Esophagus muscularis mucosa (tissue), 4 donors: ENCODE measurements at regions of chr2 and their contacts with region 1.

Region 1: GRCh38 chr2:240434728-240435456 is 571 bp upstream of the GPC1 start:
- DNase-seq: peak; percentile 95
- H3K4me3 ChIP-seq: peak overlapping the region; percentile 65 to 84 (median 77)
- H3K27ac ChIP-seq: peak overlapping the region; percentile 94 to 96 (median 95)
- H3K4me1 ChIP-seq: peaks cover 36 to 53% (median 48%) of the 10 kb centered on the region in 4 donors
- H3K27me3 ChIP-seq: peaks cover 0 to 19% (median 0%) of the 10 kb centered on the region in 4 donors
- CTCF ChIP-seq: no peak
- EP300 ChIP-seq: no peak
- POLR2A ChIP-seq: no peak

Region 2: GRCh38 chr2:240232961-240233893 is 201.7 kb before region 1 on chr2:
- intact Hi-C with region 1: loop called (anchors 1 kb)
- DNase-seq: no peak
- H3K4me3 ChIP-seq: peak overlapping the region; percentile 46 to 57 (median 48)
- H3K27ac ChIP-seq: peak overlapping the region; percentile 61 to 76 (median 70)
- H3K4me1 ChIP-seq: peaks cover 27 to 37% (median 30%) of the 10 kb centered on the region in 4 donors
- H3K27me3 ChIP-seq: peaks cover 0 to 8% (median 0%) of the 10 kb centered on the region in 4 donors
- CTCF ChIP-seq: peak; percentile 88 to 94 (median 90)
- EP300 ChIP-seq: no peak
- POLR2A ChIP-seq: no peak

Region 3: GRCh38 chr2:240355001-240355976 is 79.6 kb before region 1 on chr2:
- intact Hi-C with region 1: no loop called
- DNase-seq: no peak
- H3K4me3 ChIP-seq: no peak overlapping the region
- H3K27ac ChIP-seq: no peak overlapping the region
- H3K4me1 ChIP-seq: peaks cover 3 to 24% (median 10%) of the 10 kb centered on the region in 4 donors
- H3K27me3 ChIP-seq: peaks cover 0 to 3% (median 0%) of the 10 kb centered on the region in 4 donors
- CTCF ChIP-seq: no peak
- EP300 ChIP-seq: no peak
- POLR2A ChIP-seq: no peak

Region 4: GRCh38 chr2:240374085-240374907 is 60.6 kb before region 1 on chr2:
- intact Hi-C with region 1: loop called (anchors 2 kb)
- DNase-seq: no peak
- H3K4me3 ChIP-seq: no peak overlapping the region
- H3K27ac ChIP-seq: peak overlapping the region; percentile 77 to 86 (median 82)
- H3K4me1 ChIP-seq: peaks cover 33 to 58% (median 54%) of the 10 kb centered on the region in 4 donors
- H3K27me3 ChIP-seq: no peaks in the 10 kb centered on the region
- CTCF ChIP-seq: no peak
- EP300 ChIP-seq: no peak
- POLR2A ChIP-seq: no peak

Region 5: DNA sequence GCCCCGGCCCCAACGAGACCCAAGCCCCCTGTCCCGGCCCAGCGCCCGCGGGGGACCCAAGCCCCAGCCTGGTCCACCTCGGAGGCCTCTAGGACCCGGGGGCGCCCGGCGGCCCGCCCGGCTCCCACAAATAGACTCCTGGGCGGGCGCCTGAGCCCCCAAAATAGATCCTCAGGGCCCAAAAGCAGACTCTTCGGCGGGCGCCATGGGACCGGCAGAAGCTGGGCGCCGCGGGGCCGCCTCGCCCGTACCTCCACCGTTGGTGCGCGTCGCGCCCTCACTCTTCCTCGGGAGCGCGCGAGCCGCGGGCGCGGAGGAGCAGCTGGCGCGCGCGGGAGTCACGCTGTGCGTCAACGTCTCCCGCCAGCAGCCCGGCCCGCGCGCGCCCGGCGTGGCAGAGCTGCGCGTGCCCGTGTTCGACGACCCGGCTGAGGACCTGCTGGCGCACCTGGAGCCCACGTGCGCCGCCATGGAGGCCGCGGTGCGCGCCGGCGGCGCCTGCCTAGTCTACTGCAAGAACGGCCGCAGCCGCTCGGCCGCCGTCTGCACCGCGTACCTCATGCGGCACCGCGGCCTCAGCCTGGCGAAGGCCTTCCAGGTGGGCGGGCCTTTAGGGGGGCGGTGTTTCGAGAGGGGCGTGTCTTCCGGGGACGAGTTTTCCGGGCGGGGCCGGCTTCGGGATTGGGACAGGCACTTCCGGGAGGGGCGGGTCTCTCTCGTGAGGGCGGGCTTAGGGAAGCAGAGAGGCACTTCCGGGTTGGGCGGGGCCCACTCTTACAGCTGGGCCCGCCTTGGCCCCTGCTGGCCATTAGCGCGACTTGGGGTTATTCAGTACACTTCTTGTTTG is 125.8 kb after region 1 on chr2:
- intact Hi-C with region 1: loop called (anchors 10 kb)
- DNase-seq: peak; percentile 100
- H3K4me3 ChIP-seq: peak overlapping the region; percentile 73 to 90 (median 87)
- H3K27ac ChIP-seq: peak overlapping the region; percentile 98 to 100 (median 98)
- H3K4me1 ChIP-seq: peaks cover 53 to 70% (median 60%) of the 10 kb centered on the region in 4 donors
- H3K27me3 ChIP-seq: peaks cover 0 to 19% (median 0%) of the 10 kb centered on the region in 4 donors
- CTCF ChIP-seq: peak in 2 of 3 experiments; percentile 43 to 47
- EP300 ChIP-seq: no peak
- POLR2A ChIP-seq: peak; percentile 1